GM12878 (cell line): ENCODE measurements at regions of chr9 and their contacts with region 1.

Region 1: GRCh38 chr9:20713172-20713571 is 29.1 kb downstream of the FOCAD start:
- DNase-seq: no peak
- ATAC-seq: no peak
- H3K4me3 ChIP-seq: no peak overlapping the region
- H3K27ac ChIP-seq: no peak overlapping the region
- H3K4me1 ChIP-seq: no peaks in the 10 kb centered on the region
- H3K27me3 ChIP-seq: no peaks in the 10 kb centered on the region
- CTCF ChIP-seq: no peak
- EP300 ChIP-seq: no peak
- POLR2A ChIP-seq: no peak
- RAD21 ChIP-seq: no peak

Region 2: GRCh38 chr9:20558566-20559016 is 154.6 kb before region 1 on chr9:
- CTCF ChIA-PET with region 1: no interaction called
- POLR2A ChIA-PET with region 1: no interaction called
- RAD21 ChIA-PET with region 1: no interaction called
- SMC1A ChIA-PET with region 1: no interaction called
- in situ Hi-C with region 1: no loop called
- intact Hi-C with region 1: no loop called
- DNase-seq: no peak
- ATAC-seq: peak; percentile 64
- H3K4me3 ChIP-seq: no peak overlapping the region
- H3K27ac ChIP-seq: peak overlapping the region; percentile 36; the same call in 1 of the 2 replicates
- H3K4me1 ChIP-seq: peaks cover 31% of the 10 kb centered on the region
- H3K27me3 ChIP-seq: no peaks in the 10 kb centered on the region
- CTCF ChIP-seq: no peak
- EP300 ChIP-seq: no peak
- POLR2A ChIP-seq: no peak
- RAD21 ChIP-seq: no peak

Region 3: GRCh38 chr9:20701060-20701459 is 12.1 kb before region 1 on chr9:
- CTCF ChIA-PET with region 1: interaction called, 6 read pairs
- POLR2A ChIA-PET with region 1: interaction called, 3 read pairs
- RAD21 ChIA-PET with region 1: interaction called, 5 read pairs
- SMC1A ChIA-PET with region 1: interaction called, 19 read pairs
- in situ Hi-C with region 1: no loop called
- intact Hi-C with region 1: no loop called
- DNase-seq: no peak
- ATAC-seq: no peak
- H3K4me3 ChIP-seq: no peak overlapping the region
- H3K27ac ChIP-seq: no peak overlapping the region
- H3K4me1 ChIP-seq: no peaks in the 10 kb centered on the region
- H3K27me3 ChIP-seq: no peaks in the 10 kb centered on the region
- CTCF ChIP-seq: no peak
- EP300 ChIP-seq: no peak
- POLR2A ChIP-seq: no peak
- RAD21 ChIP-seq: no peak